GM10248 (cell line): ENCODE measurements at regions of chr18 and their contacts with region 1.

Region 1: GRCh38 chr18:961644-962355 is 57.1 kb downstream of the ADCYAP1 start:
- DNase-seq: peak; percentile 39
- CTCF ChIP-seq: peak; percentile 72

Region 2: GRCh38 chr18:864872-865273 is 96.9 kb before region 1 on chr18:
- CTCF ChIA-PET with region 1: interaction called, 37 read pairs
- POLR2A ChIA-PET with region 1: no interaction called
- DNase-seq: peak; percentile 64
- CTCF ChIP-seq: peak; percentile 95

Region 3: GRCh38 chr18:944440-944839 is 17.4 kb before region 1 on chr18:
- CTCF ChIA-PET with region 1: interaction called, 12 read pairs
- POLR2A ChIA-PET with region 1: no interaction called
- DNase-seq: no peak
- CTCF ChIP-seq: no peak

Region 4: GRCh38 chr18:950882-951539 is 10.8 kb before region 1 on chr18:
- CTCF ChIA-PET with region 1: interaction called, 10 read pairs
- POLR2A ChIA-PET with region 1: no interaction called
- DNase-seq: no peak
- CTCF ChIP-seq: no peak

Region 5: GRCh38 chr18:984004-984403 is 22.2 kb after region 1 on chr18:
- CTCF ChIA-PET with region 1: interaction called, 15 read pairs
- POLR2A ChIA-PET with region 1: no interaction called
- DNase-seq: no peak
- CTCF ChIP-seq: no peak